IMR-90 (cell line): ENCODE measurements at regions of chr14 and their contacts with region 1.

Region 1: GRCh38 chr14:102591889-102592763 is at the start of gene RCOR1:
- DNase-seq: peak; percentile 97
- ATAC-seq: peak; percentile 89
- H3K4me3 ChIP-seq: peak within 1 kb of the TSS; percentile 99
- H3K27ac ChIP-seq: peak within 1 kb of the TSS; percentile 95
- H3K4me1 ChIP-seq: peaks cover 8% of the 10 kb centered on the region
- H3K27me3 ChIP-seq: no peaks in the 10 kb centered on the region
- CTCF ChIP-seq: no peak
- POLR2A ChIP-seq: peak; percentile 98
- RAD21 ChIP-seq: no peak
- total RNA-seq, gene RCOR1: 9.0 and 11.4 TPM in 2 replicates

Region 2: GRCh38 chr14:102370305-102370809 is 221.8 kb before region 1 on chr14:
- CTCF ChIA-PET with region 1: no interaction called
- POLR2A ChIA-PET with region 1: no interaction called
- dilution Hi-C with region 1: no loop called
- in situ Hi-C with region 1: no loop called
- intact Hi-C with region 1: no loop called
- DNase-seq: peak; percentile 13
- ATAC-seq: no peak
- H3K4me3 ChIP-seq: no peak overlapping the region
- H3K27ac ChIP-seq: no peak overlapping the region
- H3K4me1 ChIP-seq: no peaks in the 10 kb centered on the region
- H3K27me3 ChIP-seq: no peaks in the 10 kb centered on the region
- CTCF ChIP-seq: no peak
- POLR2A ChIP-seq: no peak
- RAD21 ChIP-seq: no peak

Region 3: GRCh38 chr14:102437997-102438915 is 153.9 kb before region 1 on chr14:
- CTCF ChIA-PET with region 1: no interaction called
- POLR2A ChIA-PET with region 1: no interaction called
- dilution Hi-C with region 1: no loop called
- in situ Hi-C with region 1: no loop called
- intact Hi-C with region 1: loop called (anchors 5 kb)
- DNase-seq: peak; percentile 75
- ATAC-seq: peak; percentile 100
- H3K4me3 ChIP-seq: no peak overlapping the region
- H3K27ac ChIP-seq: no peak overlapping the region
- H3K4me1 ChIP-seq: no peaks in the 10 kb centered on the region
- H3K27me3 ChIP-seq: no peaks in the 10 kb centered on the region
- CTCF ChIP-seq: peak; percentile 78
- POLR2A ChIP-seq: no peak
- RAD21 ChIP-seq: peak; percentile 88

Region 4: DNA sequence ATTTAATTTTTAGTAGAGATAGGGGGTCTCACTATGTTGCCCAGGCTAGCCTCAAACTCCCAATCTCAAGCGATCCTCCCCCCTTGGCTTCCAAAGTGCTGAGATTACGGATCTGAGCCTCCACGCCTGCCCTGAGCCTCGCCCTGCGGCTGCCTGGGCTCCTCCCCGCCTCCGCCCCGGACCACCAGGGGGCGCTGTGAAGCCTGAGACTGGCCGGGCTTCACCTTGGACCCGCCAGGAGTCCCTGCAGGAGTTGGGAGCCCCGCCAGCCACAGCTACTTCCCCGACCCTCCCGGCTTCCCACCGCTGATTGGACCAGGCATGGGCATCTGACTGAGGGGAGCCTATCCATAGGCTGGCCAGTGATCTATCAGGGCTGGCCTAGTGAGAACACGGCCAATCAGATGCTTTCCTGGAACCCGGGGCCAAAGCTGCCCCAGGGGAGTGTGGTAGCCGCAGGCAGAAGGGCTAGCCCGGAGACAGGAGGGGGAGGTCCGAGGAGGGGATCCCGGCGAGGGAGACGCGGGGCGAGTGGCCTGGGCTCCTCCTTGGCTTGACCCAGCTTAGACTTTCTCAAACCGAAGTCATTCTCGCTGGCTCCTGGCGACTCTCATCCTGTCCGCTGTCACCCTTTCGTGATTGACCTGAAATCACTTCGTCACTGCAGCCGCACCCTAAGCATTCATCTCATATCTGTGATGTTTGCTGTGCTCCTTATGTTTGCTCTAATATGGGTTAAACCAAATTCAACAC is 67.5 kb before region 1 on chr14:
- CTCF ChIA-PET with region 1: interaction called, 7 read pairs
- POLR2A ChIA-PET with region 1: no interaction called
- dilution Hi-C with region 1: no loop called
- in situ Hi-C with region 1: no loop called
- intact Hi-C with region 1: loop called (anchors 1 kb)
- DNase-seq: peak; percentile 98
- ATAC-seq: peak; percentile 99
- H3K4me3 ChIP-seq: peak overlapping the region; percentile 62
- H3K27ac ChIP-seq: peak overlapping the region; percentile 62
- H3K4me1 ChIP-seq: peaks cover 6% of the 10 kb centered on the region; the same call in 1 of the 2 replicates
- H3K27me3 ChIP-seq: no peaks in the 10 kb centered on the region
- CTCF ChIP-seq: peak; percentile 99
- POLR2A ChIP-seq: peak; percentile 33; the same call in 1 of the 2 replicates
- RAD21 ChIP-seq: peak; percentile 88

Region 5: DNA sequence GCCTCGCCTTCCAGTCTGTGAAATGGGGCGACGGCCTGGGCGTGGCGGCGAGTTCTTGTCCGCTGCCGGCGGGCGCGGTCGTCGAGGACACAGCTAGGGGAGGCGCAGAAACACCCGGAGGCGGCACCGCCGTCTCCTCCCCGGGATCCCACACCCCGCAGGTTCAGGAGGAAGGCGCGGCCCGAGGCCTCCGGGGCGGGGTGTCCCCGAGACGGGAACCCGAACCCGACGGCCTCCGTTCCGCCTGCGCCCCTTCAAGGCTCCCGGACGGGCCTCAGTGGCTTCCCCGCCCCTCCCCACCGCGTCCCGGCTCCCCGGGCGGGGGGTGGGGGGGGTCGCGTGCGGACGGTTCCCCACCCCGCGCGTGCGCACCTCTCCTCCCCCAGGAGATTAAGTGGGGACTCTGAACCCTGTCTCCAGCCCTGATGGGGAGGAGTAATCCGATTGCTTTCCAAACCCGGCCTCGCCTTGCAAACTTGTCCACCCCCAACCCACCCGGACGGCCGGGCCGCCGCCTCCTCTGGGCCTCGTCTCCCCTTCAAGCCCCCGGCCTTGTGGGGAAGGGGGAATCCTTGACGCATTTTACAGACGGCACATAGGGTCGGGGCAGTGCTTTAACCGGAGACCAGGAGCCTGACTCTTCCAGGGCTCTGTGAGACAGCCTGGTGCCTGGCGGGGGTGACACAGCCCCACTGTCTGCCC is 47.2 kb before region 1 on chr14:
- CTCF ChIA-PET with region 1: no interaction called
- POLR2A ChIA-PET with region 1: no interaction called
- dilution Hi-C with region 1: no loop called
- in situ Hi-C with region 1: no loop called
- intact Hi-C with region 1: no loop called
- DNase-seq: no peak
- ATAC-seq: no peak
- H3K4me3 ChIP-seq: no peak overlapping the region
- H3K27ac ChIP-seq: no peak overlapping the region
- H3K4me1 ChIP-seq: peaks cover 7% of the 10 kb centered on the region; the same call in 1 of the 2 replicates
- H3K27me3 ChIP-seq: peaks cover 18% of the 10 kb centered on the region
- CTCF ChIP-seq: no peak
- POLR2A ChIP-seq: no peak
- RAD21 ChIP-seq: no peak

Region 6: GRCh38 chr14:102608064-102608446 is 15.9 kb after region 1 on chr14:
- CTCF ChIA-PET with region 1: interaction called, 10 read pairs
- POLR2A ChIA-PET with region 1: no interaction called
- dilution Hi-C with region 1: no loop called
- in situ Hi-C with region 1: no loop called
- intact Hi-C with region 1: no loop called
- DNase-seq: no peak
- ATAC-seq: no peak
- H3K4me3 ChIP-seq: no peak overlapping the region
- H3K27ac ChIP-seq: no peak overlapping the region
- H3K4me1 ChIP-seq: peaks cover 5% of the 10 kb centered on the region
- H3K27me3 ChIP-seq: no peaks in the 10 kb centered on the region
- CTCF ChIP-seq: no peak
- POLR2A ChIP-seq: no peak
- RAD21 ChIP-seq: no peak

Region 7: GRCh38 chr14:102694530-102695166 is 102.5 kb after region 1 on chr14:
- CTCF ChIA-PET with region 1: interaction called, 6 read pairs
- POLR2A ChIA-PET with region 1: no interaction called
- dilution Hi-C with region 1: no loop called
- in situ Hi-C with region 1: no loop called
- intact Hi-C with region 1: loop called (anchors 5 kb)
- DNase-seq: peak; percentile 73
- ATAC-seq: peak; percentile 86
- H3K4me3 ChIP-seq: no peak overlapping the region
- H3K27ac ChIP-seq: no peak overlapping the region
- H3K4me1 ChIP-seq: no peaks in the 10 kb centered on the region; the same call in 1 of the 2 replicates
- H3K27me3 ChIP-seq: no peaks in the 10 kb centered on the region
- CTCF ChIP-seq: peak; percentile 76
- POLR2A ChIP-seq: no peak
- RAD21 ChIP-seq: peak; percentile 75

Region 8: GRCh38 chr14:102774391-102775153 is 182.4 kb after region 1 on chr14:
- CTCF ChIA-PET with region 1: no interaction called
- POLR2A ChIA-PET with region 1: no interaction called
- dilution Hi-C with region 1: no loop called
- in situ Hi-C with region 1: no loop called
- intact Hi-C with region 1: loop called (anchors 10 kb)
- DNase-seq: peak; percentile 78
- ATAC-seq: peak; percentile 56
- H3K4me3 ChIP-seq: no peak overlapping the region
- H3K27ac ChIP-seq: no peak overlapping the region
- H3K4me1 ChIP-seq: peaks cover 10% of the 10 kb centered on the region
- H3K27me3 ChIP-seq: peaks cover 3% of the 10 kb centered on the region; the same call in 1 of the 2 replicates
- CTCF ChIP-seq: peak; percentile 85
- POLR2A ChIP-seq: no peak
- RAD21 ChIP-seq: peak; percentile 76

Region 9: GRCh38 chr14:102917469-102918211 is 325.5 kb after region 1 on chr14:
- CTCF ChIA-PET with region 1: no interaction called
- POLR2A ChIA-PET with region 1: no interaction called
- dilution Hi-C with region 1: no loop called
- in situ Hi-C with region 1: no loop called
- intact Hi-C with region 1: loop called (anchors 10 kb)
- DNase-seq: peak; percentile 24
- ATAC-seq: peak; percentile 74
- H3K4me3 ChIP-seq: no peak overlapping the region
- H3K27ac ChIP-seq: no peak overlapping the region
- H3K4me1 ChIP-seq: no peaks in the 10 kb centered on the region
- H3K27me3 ChIP-seq: peaks cover 9% of the 10 kb centered on the region
- CTCF ChIP-seq: peak; percentile 72
- POLR2A ChIP-seq: no peak
- RAD21 ChIP-seq: peak; percentile 74